ENCODE measurements at regions of chr2 and their contacts with region 1.

Region 1: GRCh38 chr2:232315049-232315922 is 63.3 kb upstream of the ALPP start:
- DNase-seq: peak; percentile 89
- H3K4me3 Mint-ChIP-seq: peak overlapping the region; percentile 40
- H3K27ac Mint-ChIP-seq: peak overlapping the region; percentile 91
- H3K4me1 Mint-ChIP-seq: peaks cover 79% of the 10 kb centered on the region
- H3K27me3 Mint-ChIP-seq: no peaks in the 10 kb centered on the region

Region 2: DNA sequence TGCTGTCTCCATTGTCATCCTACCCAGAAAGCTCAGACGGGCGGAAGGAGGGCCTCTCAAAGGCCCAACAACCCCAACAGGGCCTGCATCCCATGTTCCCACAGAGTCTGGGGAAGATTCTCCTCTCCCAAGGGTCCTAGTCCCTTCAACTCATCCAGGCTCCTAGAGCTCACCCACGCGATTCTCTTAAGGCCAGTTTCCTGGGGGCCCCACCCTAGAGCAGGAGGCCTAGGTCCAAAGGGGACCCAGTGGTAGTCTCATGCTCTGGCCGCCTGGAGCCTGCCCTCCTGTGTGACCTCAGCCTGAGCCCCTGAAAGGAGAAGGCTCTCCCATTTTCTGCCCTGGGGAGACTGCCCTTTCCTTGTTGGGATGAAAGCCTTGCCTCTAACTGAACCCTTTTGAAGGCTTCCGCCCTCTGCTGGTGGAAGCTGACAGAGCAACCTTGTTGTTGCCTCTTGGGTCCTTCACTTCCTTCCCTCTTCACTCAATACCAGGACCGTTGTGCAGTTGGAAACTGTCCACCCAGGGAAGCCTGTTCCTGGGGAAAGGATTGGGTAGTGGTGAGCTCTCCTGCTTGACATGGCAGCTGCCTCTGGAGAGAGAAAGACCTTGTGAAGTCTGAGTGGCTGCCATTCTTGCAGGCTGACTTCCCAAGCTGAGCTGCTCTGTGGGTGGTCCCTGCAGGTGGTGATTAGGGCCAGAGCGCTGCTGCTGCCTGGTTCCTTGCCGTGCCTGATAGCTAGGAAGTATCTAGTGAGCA is 22.7 kb before region 1 on chr2:
- CTCF ChIA-PET with region 1: interaction called, 30 read pairs
- POLR2A ChIA-PET with region 1: interaction called, 8 read pairs
- DNase-seq: peak; percentile 76
- H3K4me3 Mint-ChIP-seq: no peak overlapping the region
- H3K27ac Mint-ChIP-seq: no peak overlapping the region
- H3K4me1 Mint-ChIP-seq: peaks cover 3% of the 10 kb centered on the region
- H3K27me3 Mint-ChIP-seq: no peaks in the 10 kb centered on the region